ENCODE measurements at regions of chr11 and their contacts with region 1.

Region 1: GRCh38 chr11:7513234-7514098 is at the start of gene PPFIBP2:
- DNase-seq: peak; percentile 87
- H3K4me3 Mint-ChIP-seq: peak within 1 kb of the TSS; percentile 86
- H3K27ac Mint-ChIP-seq: peak within 1 kb of the TSS; percentile 90
- H3K4me1 Mint-ChIP-seq: peaks cover 48% of the 10 kb centered on the region
- H3K27me3 Mint-ChIP-seq: no peaks in the 10 kb centered on the region
- total RNA-seq, gene PPFIBP2: 22.2 to 26.1 TPM

Region 2: GRCh38 chr11:7495882-7496551 is 17.4 kb before region 1 on chr11:
- CTCF ChIA-PET with region 1: no interaction called
- intact Hi-C with region 1: loop called (anchors 1 kb)
- DNase-seq: peak; percentile 18
- H3K4me3 Mint-ChIP-seq: no peak overlapping the region
- H3K27ac Mint-ChIP-seq: peak overlapping the region; percentile 37
- H3K4me1 Mint-ChIP-seq: peaks cover 8% of the 10 kb centered on the region
- H3K27me3 Mint-ChIP-seq: no peaks in the 10 kb centered on the region

Region 3: DNA sequence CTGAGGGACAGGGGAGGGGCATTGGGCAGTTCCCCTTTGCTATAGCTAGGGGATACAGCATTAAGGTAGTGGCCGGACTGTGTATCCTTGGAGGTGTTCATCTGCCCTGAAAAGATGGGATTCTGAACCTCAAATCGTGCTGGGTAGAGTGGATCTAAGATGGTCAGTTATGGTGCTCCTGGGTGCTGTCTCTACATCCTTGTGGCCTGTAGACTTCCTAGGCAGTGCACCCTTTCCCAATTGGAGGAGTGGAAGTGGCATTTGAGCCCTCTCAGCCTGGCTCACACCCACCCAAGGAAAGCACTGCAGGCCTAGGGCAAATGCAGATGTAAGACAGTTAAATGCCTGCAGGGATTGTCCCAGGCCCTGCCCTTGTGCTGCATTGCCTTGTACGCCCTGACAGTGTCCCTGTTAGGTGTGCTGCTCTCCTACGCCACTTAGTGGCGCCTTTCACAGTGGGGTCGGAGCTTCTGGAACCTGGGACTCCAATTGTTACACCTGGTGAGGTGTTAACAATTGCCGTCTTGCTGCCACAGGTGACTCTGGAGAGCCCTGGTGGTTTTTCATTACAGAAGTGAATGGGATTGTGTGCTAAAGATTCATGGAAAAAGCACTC is 35.3 kb after region 1 on chr11:
- CTCF ChIA-PET with region 1: interaction called, 21 read pairs
- intact Hi-C with region 1: loop called (anchors 1 kb)
- DNase-seq: peak; percentile 63
- H3K4me3 Mint-ChIP-seq: no peak overlapping the region
- H3K27ac Mint-ChIP-seq: no peak overlapping the region
- H3K4me1 Mint-ChIP-seq: peaks cover 11% of the 10 kb centered on the region
- H3K27me3 Mint-ChIP-seq: no peaks in the 10 kb centered on the region

Region 4: GRCh38 chr11:7577291-7578190 is 64.1 kb after region 1 on chr11:
- CTCF ChIA-PET with region 1: interaction called, 11 read pairs
- intact Hi-C with region 1: loop called (anchors 2 kb)
- DNase-seq: peak; percentile 31
- H3K4me3 Mint-ChIP-seq: no peak overlapping the region
- H3K27ac Mint-ChIP-seq: no peak overlapping the region
- H3K4me1 Mint-ChIP-seq: peaks cover 43% of the 10 kb centered on the region
- H3K27me3 Mint-ChIP-seq: no peaks in the 10 kb centered on the region

Region 5: GRCh38 chr11:7665473-7666291 is 152.2 kb after region 1 on chr11:
- CTCF ChIA-PET with region 1: interaction called, 15 read pairs
- intact Hi-C with region 1: loop called (anchors 1 kb)
- DNase-seq: peak; percentile 85
- H3K4me3 Mint-ChIP-seq: no peak overlapping the region
- H3K27ac Mint-ChIP-seq: no peak overlapping the region
- H3K4me1 Mint-ChIP-seq: peaks cover 7% of the 10 kb centered on the region
- H3K27me3 Mint-ChIP-seq: no peaks in the 10 kb centered on the region

Region 6: DNA sequence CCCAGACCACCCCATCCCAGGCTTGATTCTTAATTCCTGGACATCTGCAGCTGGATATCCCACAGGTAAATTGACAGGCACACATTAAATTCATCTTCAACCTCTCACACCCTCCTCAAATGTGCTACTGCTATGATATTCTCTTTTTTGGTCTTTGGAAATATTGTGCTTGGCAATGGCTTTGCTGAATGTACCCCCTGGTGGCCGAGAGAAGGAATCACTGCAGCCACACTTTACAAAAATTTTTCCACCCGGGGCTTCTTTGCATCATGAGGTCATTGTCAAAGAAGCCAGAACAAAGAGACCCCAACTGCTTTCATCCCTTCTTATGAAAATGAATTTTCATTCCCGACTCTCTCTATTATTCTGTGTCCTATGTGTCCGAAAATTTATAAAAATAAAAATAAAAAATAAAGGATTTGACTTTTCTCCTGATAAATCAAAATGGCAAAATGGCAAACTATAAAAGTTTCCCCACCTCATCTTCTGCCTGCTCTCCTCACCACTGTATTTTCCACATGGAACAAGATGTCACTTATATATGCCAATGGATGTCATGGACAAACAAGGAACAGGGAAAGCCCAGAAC is 174.9 kb after region 1 on chr11:
- CTCF ChIA-PET with region 1: interaction called, 11 read pairs
- intact Hi-C with region 1: loop called (anchors 1 kb)
- DNase-seq: peak; percentile 35
- H3K4me3 Mint-ChIP-seq: no peak overlapping the region
- H3K27ac Mint-ChIP-seq: no peak overlapping the region
- H3K4me1 Mint-ChIP-seq: peaks cover 6% of the 10 kb centered on the region
- H3K27me3 Mint-ChIP-seq: peaks cover 26% of the 10 kb centered on the region

Region 7: GRCh38 chr11:7986768-7987559 is 473.5 kb after region 1 on chr11 and contains the start of gene EIF3F:
- CTCF ChIA-PET with region 1: no interaction called
- intact Hi-C with region 1: loop called (anchors 1 kb)
- DNase-seq: peak; percentile 94
- H3K4me3 Mint-ChIP-seq: peak within 1 kb of the TSS; percentile 88
- H3K27ac Mint-ChIP-seq: peak within 1 kb of the TSS; percentile 92
- H3K4me1 Mint-ChIP-seq: peaks cover 37% of the 10 kb centered on the region
- H3K27me3 Mint-ChIP-seq: no peaks in the 10 kb centered on the region
- total RNA-seq, gene EIF3F: 365 to 380 TPM